Motor neuron (in vitro differentiated cells): ENCODE measurements at regions of chr5 and their contacts with region 1.

Region 1: DNA sequence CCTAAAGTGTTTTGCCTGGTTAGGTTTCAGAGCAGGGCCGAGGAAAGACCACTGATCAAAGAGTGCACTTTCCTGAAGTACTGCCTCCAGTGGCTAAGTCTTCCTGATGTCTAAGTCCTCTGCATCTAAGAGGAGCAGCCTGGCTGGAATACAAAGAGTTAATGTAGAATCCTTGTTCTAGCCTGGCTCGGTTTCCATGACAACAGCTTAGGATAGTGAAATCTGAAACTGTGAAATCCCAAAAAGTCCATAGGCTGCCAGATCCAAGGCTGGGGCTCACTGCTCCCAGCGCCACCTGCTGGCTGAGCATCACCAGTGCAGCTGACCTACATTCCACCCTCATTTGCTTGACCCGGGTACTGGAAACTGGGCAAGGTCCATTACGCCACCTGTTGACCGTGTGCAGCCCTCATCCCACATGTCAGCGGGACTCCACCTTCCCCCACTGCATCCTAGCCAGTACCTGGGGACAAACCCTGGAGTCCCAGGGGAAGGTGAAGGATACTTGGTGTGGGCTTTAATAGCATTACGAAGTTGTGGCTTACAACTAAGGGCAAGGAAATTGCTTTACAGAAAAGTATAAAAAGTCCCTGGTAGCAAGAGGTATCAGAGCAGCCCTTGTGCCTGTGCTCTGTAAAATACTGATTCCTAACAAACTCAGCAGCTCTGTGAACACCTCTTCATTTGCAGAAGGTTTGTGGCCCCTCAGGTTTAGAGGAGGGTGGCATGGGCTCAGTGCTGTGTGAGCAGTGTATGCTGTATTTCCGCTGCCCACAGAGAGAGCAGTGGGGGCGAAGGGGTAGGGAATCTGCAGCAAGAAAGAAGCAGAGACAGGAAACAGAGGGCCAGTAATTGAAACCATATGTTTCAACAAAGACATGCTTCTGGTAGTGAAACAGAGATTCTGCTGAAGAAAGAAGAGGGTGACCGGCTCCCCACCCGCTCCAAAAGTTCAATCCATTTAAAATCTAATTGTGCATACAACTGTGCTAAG is 36.0 kb downstream of the PCDHGC5 start:
- ATAC-seq: peak; percentile 48 to 93 (median 85)
- H3K4me3 ChIP-seq: no peak overlapping the region
- H3K27ac ChIP-seq: no peak overlapping the region
- H3K4me1 ChIP-seq: peaks cover 23 to 27% of the 10 kb centered on the region in 2 donors

Region 2: GRCh38 chr5:141320225-141321169 is 204.4 kb before region 1 on chr5 and contains the start of gene TAF7:
- in situ Hi-C with region 1: no loop called
- ATAC-seq: peak; percentile 95 to 99 (median 98)
- H3K4me3 ChIP-seq: peak within 1 kb of the TSS; percentile 48 to 72 (median 67)
- H3K27ac ChIP-seq: peak within 1 kb of the TSS; percentile 93 to 96
- H3K4me1 ChIP-seq: no peaks in the 10 kb centered on the region
- total RNA-seq, gene TAF7: 58.8 to 118 (median 71.3) TPM

Region 3: DNA sequence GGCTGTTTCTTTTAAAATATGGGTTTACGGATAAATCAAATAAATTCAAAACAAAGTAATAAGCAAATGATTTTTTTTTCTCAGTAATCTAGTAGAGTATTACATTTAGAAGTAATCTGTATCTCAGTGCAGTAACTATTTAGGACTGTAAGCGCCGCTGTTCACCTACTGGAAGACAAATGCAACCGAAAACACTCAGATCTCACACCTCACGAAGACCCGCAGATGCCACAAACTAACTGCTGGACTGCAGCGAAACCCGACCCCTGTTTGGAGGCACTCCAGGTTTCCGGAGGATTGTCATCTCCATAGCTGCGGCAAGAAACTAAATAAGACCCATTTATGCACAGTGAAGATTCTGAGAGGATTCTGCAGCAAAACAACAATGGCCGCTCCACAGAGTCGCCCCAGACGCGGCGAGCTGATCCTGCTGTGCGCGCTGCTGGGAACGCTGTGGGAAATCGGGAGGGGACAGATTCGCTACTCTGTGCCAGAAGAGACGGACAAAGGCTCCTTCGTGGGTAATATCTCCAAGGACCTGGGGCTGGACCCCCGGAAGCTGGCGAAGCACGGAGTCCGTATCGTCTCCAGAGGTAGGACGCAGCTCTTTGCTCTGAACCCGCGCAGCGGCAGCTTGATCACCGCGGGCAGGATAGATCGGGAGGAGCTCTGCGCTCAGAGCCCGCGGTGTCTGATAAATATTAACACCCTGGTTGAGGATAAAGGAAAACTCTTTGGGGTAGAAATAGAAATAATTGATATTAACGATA is 132.3 kb before region 1 on chr5 and contains the start of gene PCDHGA8:
- in situ Hi-C with region 1: no loop called
- ATAC-seq: no peak
- H3K4me3 ChIP-seq: no peak within 1 kb of the TSS
- H3K27ac ChIP-seq: no peak within 1 kb of the TSS
- H3K4me1 ChIP-seq: no peaks in the 10 kb centered on the region
- total RNA-seq, gene PCDHGA8: 0.11 to 5.7 (median 0.57) TPM

Region 4: GRCh38 chr5:141402553-141403260 is 122.2 kb before region 1 on chr5 and contains the start of gene PCDHGA9:
- in situ Hi-C with region 1: loop called in 5 of 9 experiments (anchors 10 to 25 kb)
- ATAC-seq: peak in 2 of 8 experiments; percentile 68 to 88
- H3K4me3 ChIP-seq: no peak within 1 kb of the TSS
- H3K27ac ChIP-seq: no peak within 1 kb of the TSS
- H3K4me1 ChIP-seq: no peaks in the 10 kb centered on the region
- total RNA-seq, gene PCDHGA9: 0.22 to 5.5 (median 1.3) TPM

Region 5: GRCh38 chr5:141412854-141413539 is 111.9 kb before region 1 on chr5 and contains the start of gene PCDHGA10:
- in situ Hi-C with region 1: loop called in 5 of 9 experiments (anchors 10 to 25 kb)
- ATAC-seq: peak in 5 of 8 experiments; percentile 27 to 60 (median 56)
- H3K4me3 ChIP-seq: peak within 1 kb of the TSS in 4 of 5 donors; percentile 15 to 40 (median 24)
- H3K27ac ChIP-seq: no peak within 1 kb of the TSS
- H3K4me1 ChIP-seq: peaks cover 11 to 15% of the 10 kb centered on the region in 2 donors
- total RNA-seq, gene PCDHGA10: 2.1 to 7.6 (median 4.4) TPM

Region 6: DNA sequence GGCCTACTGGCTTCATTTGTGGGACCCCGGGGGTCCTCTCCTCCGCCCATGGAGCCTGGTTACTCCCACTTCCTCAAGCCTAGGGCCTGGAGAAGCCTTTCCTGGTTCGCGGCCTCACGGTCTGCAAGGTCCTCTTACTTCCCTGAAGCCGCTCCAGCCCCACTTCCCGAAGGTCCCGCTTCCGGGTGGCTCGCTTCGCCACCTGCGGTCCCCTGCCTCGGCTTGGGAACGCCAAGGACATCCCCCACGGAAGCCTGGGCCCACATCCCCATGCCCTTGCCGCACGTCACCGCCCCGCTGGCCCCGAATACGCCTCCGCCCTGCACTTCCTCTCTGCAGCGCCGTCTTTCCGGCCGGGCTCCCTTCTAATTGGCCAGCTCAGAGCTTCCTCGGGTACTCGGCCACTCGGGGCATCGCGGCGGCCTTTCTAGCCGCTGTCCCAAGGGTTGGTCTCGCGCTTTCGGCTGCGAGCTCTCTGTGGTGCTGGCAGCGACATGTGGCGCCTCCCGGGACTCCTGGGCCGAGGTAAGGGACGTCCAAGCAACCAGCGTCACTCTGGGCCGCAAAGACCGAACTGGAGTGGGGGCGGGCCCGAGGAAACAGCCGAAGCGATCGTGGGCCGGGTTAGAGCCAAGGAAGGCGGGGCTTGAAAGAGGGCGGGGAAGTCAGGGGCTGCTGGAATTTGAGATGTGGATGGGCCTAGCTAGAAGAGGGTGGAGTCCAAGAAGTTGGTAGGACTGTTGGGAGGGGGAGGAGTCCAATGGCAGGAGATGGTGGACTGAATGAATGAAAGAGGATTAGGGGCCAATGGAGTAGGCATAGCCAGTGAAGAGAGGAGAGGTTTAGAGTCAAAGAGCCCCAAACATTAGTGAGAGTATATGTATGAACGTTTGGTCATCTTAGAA is 398.8 kb after region 1 on chr5 and contains the start of gene DELE1:
- in situ Hi-C with region 1: no loop called
- ATAC-seq: peak; percentile 93 to 97 (median 95)
- H3K4me3 ChIP-seq: peak within 1 kb of the TSS; percentile 43 to 70 (median 50)
- H3K27ac ChIP-seq: peak within 1 kb of the TSS; percentile 92 to 96
- H3K4me1 ChIP-seq: peaks cover 12 to 13% of the 10 kb centered on the region in 2 donors
- total RNA-seq, gene DELE1: 26.9 to 78.7 (median 39.9) TPM